Psoas muscle (tissue), 8 donors: ENCODE measurements at regions of chr2 and their contacts with region 1.

Region 1: GRCh38 chr2:28233164-28233676 is 159.4 kb upstream of the FOSL2 start:
- DNase-seq: no peak
- ATAC-seq: no peak
- H3K4me3 ChIP-seq: no peak overlapping the region
- H3K27ac ChIP-seq: no peak overlapping the region
- H3K4me1 ChIP-seq: peaks cover 29% of the 10 kb centered on the region
- H3K27me3 ChIP-seq: no peaks in the 10 kb centered on the region
- CTCF ChIP-seq: no peak

Region 2: GRCh38 chr2:28276076-28276618 is 42.9 kb after region 1 on chr2:
- intact Hi-C with region 1: loop called in 1 of 2 experiments (anchors 5 kb)
- DNase-seq: no peak
- ATAC-seq: peak; percentile 55 to 72 (median 56)
- H3K4me3 ChIP-seq: no peak overlapping the region
- H3K27ac ChIP-seq: peak overlapping the region; percentile 76
- H3K4me1 ChIP-seq: peaks cover 33% of the 10 kb centered on the region
- H3K27me3 ChIP-seq: no peaks in the 10 kb centered on the region
- CTCF ChIP-seq: no peak

Region 3: DNA sequence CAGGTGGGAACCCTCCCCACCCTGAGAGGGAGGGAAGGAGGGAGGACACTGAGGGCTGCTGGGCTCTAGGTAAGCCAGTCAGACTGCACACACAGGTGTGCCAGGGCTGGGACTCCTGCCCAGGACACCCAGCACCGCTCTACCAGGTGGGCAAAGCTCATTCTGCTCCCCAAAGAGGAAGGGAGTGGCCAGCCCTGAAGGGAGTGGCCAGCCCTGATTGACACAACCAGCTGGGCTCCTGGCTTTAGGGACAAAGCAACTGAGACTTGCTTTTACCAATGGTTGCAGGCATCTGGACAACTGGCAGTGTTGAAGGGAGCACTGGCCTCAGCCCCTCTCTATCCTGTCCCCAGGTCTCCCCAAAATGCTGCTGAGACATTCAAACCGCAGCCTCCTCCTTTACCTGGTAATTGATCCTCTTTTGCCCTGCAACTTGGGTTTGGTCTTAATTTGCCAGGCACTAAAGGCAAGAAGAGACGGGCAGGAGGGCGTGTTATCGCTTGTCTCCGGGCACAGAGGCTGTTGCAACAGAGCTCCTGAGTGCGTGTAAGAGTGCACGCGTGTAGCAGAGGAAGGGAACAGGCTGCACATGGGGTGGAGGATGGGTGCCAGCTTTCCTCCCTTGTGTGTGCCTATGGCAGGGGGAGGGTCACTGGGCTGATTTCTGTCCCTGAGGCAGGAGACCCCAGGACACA is 144.9 kb after region 1 on chr2:
- intact Hi-C with region 1: loop called in 1 of 2 experiments (anchors 5 kb)
- DNase-seq: peak; percentile 56 to 87
- ATAC-seq: peak; percentile 83 to 93 (median 92)
- H3K4me3 ChIP-seq: peak overlapping the region; percentile 31
- H3K27ac ChIP-seq: peak overlapping the region; percentile 87
- H3K4me1 ChIP-seq: peaks cover 18% of the 10 kb centered on the region
- H3K27me3 ChIP-seq: no peaks in the 10 kb centered on the region
- CTCF ChIP-seq: no peak